WTC11 (cell line): ENCODE measurements at regions of chr5 and their contacts with region 1.

Region 1: GRCh38 chr5:171418316-171418981 is 998 bp upstream of the FGF18 start:
- DNase-seq: peak; percentile 89
- ATAC-seq: peak; percentile 63
- H3K4me3 Mint-ChIP-seq: peak overlapping the region; percentile 74
- H3K27ac Mint-ChIP-seq: no peak overlapping the region
- H3K4me1 Mint-ChIP-seq: peaks cover 25% of the 10 kb centered on the region
- H3K27me3 Mint-ChIP-seq: peaks cover 39% of the 10 kb centered on the region
- CTCF ChIP-seq: peak; percentile 77

Region 2: GRCh38 chr5:171342362-171343111 is 75.9 kb before region 1 on chr5:
- CTCF ChIA-PET with region 1: no interaction called
- POLR2A ChIA-PET with region 1: no interaction called
- DNase-seq: peak; percentile 44
- ATAC-seq: peak; percentile 98
- H3K4me3 Mint-ChIP-seq: no peak overlapping the region
- H3K27ac Mint-ChIP-seq: peak overlapping the region; percentile 74; the same call in 1 of the 2 replicates
- H3K4me1 Mint-ChIP-seq: no peaks in the 10 kb centered on the region
- H3K27me3 Mint-ChIP-seq: peaks cover 10% of the 10 kb centered on the region
- CTCF ChIP-seq: peak; percentile 60

Region 3: GRCh38 chr5:171450423-171451331 is 32.2 kb after region 1 on chr5:
- CTCF ChIA-PET with region 1: interaction called, 29 read pairs
- POLR2A ChIA-PET with region 1: no interaction called
- DNase-seq: peak; percentile 61
- ATAC-seq: peak; percentile 54
- H3K4me3 Mint-ChIP-seq: peak overlapping the region; percentile 59
- H3K27ac Mint-ChIP-seq: no peak overlapping the region
- H3K4me1 Mint-ChIP-seq: peaks cover 52% of the 10 kb centered on the region
- H3K27me3 Mint-ChIP-seq: peaks cover 21% of the 10 kb centered on the region
- CTCF ChIP-seq: no peak

Region 4: DNA sequence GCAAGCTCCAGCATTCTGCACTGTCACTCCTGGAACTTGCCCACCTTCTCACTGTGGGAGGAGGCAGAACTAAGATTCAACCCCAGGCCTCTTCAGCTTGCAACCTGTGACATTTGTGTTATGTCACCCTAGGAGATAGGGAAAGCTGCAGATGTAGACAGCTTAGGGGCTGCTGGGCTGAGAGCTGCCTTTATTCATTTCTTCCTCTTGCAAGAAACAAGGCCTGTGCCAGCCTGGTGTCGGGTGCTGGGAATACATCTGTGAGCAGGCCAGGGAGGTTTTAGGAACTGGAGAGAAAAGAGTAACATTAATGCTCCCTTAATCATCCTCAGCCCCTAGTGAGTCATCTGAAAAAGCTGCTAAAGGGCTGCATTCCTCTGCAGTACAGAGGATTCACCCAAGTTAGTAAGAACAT is 102.8 kb after region 1 on chr5:
- CTCF ChIA-PET with region 1: interaction called, 11 read pairs
- POLR2A ChIA-PET with region 1: no interaction called
- DNase-seq: no peak
- ATAC-seq: peak; percentile 12
- H3K4me3 Mint-ChIP-seq: no peak overlapping the region
- H3K27ac Mint-ChIP-seq: peak overlapping the region; percentile 56; the same call in 1 of the 2 replicates
- H3K4me1 Mint-ChIP-seq: peaks cover 67% of the 10 kb centered on the region
- H3K27me3 Mint-ChIP-seq: peaks cover 25% of the 10 kb centered on the region
- CTCF ChIP-seq: no peak

Region 5: GRCh38 chr5:171595801-171596231 is 177.4 kb after region 1 on chr5:
- CTCF ChIA-PET with region 1: interaction called, 11 read pairs
- POLR2A ChIA-PET with region 1: no interaction called
- DNase-seq: no peak
- ATAC-seq: no peak
- H3K4me3 Mint-ChIP-seq: no peak overlapping the region
- H3K27ac Mint-ChIP-seq: no peak overlapping the region
- H3K4me1 Mint-ChIP-seq: peaks cover 3% of the 10 kb centered on the region; the same call in 1 of the 2 replicates
- H3K27me3 Mint-ChIP-seq: no peaks in the 10 kb centered on the region; the same call in 1 of the 2 replicates
- CTCF ChIP-seq: no peak

Region 6: DNA sequence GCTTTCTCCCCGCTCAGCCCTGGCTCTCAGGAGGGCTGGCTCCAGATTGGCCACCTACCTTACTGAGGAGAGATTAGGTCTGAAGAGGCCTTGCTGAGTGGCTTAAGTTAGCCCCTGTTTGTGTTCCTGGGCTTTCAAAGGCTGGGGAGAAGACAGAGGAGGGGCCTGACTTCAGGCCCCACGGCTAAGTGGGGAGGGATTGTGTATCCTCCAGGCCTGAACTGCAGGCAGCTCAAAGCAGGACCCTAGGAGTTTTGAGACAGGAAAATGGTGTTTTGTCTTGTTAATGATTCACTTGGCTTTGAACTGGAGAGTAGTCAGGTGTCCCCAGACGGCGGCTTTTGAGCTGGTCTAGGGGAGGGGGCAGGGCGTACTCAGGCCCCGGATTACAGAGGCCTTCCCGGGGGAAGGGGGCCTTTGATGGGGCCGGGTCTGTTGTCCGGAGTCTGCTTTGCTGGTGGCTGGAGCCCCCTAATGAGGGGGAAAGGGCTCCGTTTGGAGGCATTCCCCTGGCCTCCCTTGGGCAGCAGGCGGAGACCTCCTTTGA is 205.2 kb after region 1 on chr5:
- CTCF ChIA-PET with region 1: interaction called, 12 read pairs
- POLR2A ChIA-PET with region 1: no interaction called
- DNase-seq: peak; percentile 81
- ATAC-seq: peak; percentile 98
- H3K4me3 Mint-ChIP-seq: peak overlapping the region; percentile 38
- H3K27ac Mint-ChIP-seq: no peak overlapping the region
- H3K4me1 Mint-ChIP-seq: peaks cover 35% of the 10 kb centered on the region
- H3K27me3 Mint-ChIP-seq: peaks cover 98% of the 10 kb centered on the region
- CTCF ChIP-seq: no peak

Region 7: GRCh38 chr5:171701100-171701541 is 282.7 kb after region 1 on chr5:
- CTCF ChIA-PET with region 1: no interaction called
- POLR2A ChIA-PET with region 1: no interaction called
- DNase-seq: no peak
- ATAC-seq: no peak
- H3K4me3 Mint-ChIP-seq: no peak overlapping the region
- H3K27ac Mint-ChIP-seq: no peak overlapping the region
- H3K4me1 Mint-ChIP-seq: no peaks in the 10 kb centered on the region
- H3K27me3 Mint-ChIP-seq: no peaks in the 10 kb centered on the region
- CTCF ChIP-seq: no peak

Region 8: GRCh38 chr5:171858303-171858702 is 439.9 kb after region 1 on chr5:
- CTCF ChIA-PET with region 1: interaction called, 24 read pairs
- POLR2A ChIA-PET with region 1: no interaction called
- DNase-seq: peak; percentile 37
- ATAC-seq: peak; percentile 85
- H3K4me3 Mint-ChIP-seq: no peak overlapping the region
- H3K27ac Mint-ChIP-seq: peak overlapping the region; percentile 73
- H3K4me1 Mint-ChIP-seq: peaks cover 16% of the 10 kb centered on the region
- H3K27me3 Mint-ChIP-seq: no peaks in the 10 kb centered on the region
- CTCF ChIP-seq: peak; percentile 57